Lower leg skin (tissue), 4 donors: ENCODE measurements at regions of chr6 and their contacts with region 1.

Region 1: GRCh38 chr6:154156135-154156896 is 117.3 kb downstream of the OPRM1 start:
- DNase-seq: no peak
- H3K4me3 ChIP-seq: no peak overlapping the region
- CTCF ChIP-seq: no peak
- POLR2A ChIP-seq: no peak

Region 2: GRCh38 chr6:154276810-154277628 is 120.7 kb after region 1 on chr6:
- intact Hi-C with region 1: loop called (anchors 10 kb)
- DNase-seq: no peak
- H3K4me3 ChIP-seq: no peak overlapping the region
- CTCF ChIP-seq: no peak
- POLR2A ChIP-seq: no peak